Dorsolateral prefrontal cortex (tissue), 120 donors: ENCODE measurements at regions of chr11 and their contacts with region 1.

Region 1: DNA sequence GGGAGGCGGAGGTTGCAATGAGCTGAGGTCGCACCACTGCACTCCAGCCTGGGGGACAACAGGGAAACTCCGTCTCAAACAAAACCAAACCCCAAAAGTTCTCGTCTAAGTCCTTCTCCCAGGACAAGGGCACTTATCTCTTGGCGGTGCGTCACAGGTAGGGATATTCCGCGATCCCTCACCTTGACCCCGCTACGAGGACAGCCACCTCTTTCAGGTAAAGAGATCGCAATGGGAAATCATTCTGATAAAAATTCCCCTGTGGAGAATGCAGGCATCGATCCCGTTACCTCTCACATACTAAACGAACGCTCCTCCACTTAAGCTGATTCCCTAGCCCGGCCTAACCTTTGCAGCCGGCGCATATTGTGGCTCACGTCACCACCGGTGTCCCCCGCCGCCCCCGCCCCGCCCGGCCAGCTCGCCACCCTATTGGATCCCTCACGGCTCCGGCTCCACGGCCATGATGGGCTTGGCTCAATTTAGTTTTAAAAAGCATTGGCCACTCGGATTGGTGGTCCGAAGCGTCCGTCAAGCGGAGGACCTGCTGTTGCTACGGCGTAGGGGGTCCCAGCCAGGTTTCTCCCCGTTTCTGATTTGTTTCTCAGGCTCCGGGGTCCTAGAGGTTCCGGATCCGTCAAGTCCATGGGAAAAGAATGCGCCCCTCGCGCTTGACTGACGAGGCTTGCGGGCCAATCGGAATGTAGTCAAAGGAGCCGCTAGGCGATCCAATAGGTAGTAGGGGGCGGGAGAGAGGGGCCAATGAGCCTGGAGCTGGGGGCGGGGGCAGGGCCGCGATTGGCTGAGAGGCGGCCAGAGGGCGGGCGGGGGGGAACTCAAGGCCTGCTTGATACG is 439 bp upstream of the PPP6R3 start:
- DNase-seq: peak; percentile 91 to 99 (median 98)
- H3K4me3 ChIP-seq: peak overlapping the region; percentile 55 to 96 (median 86)
- H3K27ac ChIP-seq: peak overlapping the region; percentile 80 to 99 (median 95)
- H3K27me3 ChIP-seq: no peaks in the 10 kb centered on the region
- CTCF ChIP-seq: peak in 7 of 56 donors; percentile 1 to 43 (median 15)

Region 2: DNA sequence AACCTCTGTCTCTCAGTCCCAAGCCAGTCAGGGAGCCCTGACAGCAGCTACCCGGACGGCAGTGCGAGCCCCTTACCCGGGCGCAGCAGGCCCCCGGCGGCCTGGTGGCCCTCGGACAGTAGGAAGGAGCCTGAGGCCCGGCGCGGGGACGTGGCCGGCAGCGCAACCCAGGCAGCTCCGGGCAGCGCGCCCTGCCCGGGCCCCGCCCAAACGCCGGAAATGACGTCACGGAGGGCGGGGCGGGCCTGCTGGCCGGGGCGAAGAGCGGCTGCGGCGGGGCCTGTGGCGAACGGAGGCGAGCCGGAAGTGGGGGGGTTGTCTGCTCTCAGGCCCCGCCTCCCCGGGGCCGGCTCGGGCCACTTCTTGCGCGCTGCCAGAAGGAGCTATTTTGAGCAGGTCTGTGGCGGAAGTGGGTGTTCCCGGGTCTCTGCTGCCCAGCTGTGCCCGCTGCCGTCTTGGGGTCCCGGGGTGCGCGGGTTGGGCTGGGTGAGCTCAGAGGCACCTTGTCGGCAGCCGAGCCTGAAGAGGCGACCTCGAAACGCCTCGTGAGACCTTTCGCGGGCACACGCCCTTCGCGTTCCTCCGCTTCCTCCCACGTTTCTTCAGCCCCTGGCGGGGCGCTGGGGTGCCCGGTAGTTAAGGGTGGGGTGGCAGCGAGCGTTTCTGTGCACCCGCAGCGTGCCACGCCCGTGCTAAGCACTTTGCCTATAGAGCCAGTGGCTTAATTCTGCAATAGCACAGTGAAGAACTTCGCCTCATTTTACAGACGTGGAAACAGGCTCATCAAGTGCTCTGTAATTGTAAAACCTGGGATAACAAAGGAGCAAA is 188.1 kb before region 1 on chr11 and contains the start of gene C11orf24:
- intact Hi-C with region 1: loop called in 1 of 2 experiments (anchors 5 kb)
- DNase-seq: peak; percentile 88 to 98 (median 94)
- H3K4me3 ChIP-seq: peak within 1 kb of the TSS; percentile 67 to 98 (median 87)
- H3K27ac ChIP-seq: peak within 1 kb of the TSS; percentile 46 to 98 (median 93)
- H3K27me3 ChIP-seq: no peaks in the 10 kb centered on the region
- CTCF ChIP-seq: peak in 25 of 56 donors; percentile 4 to 54 (median 27)
- total RNA-seq, gene C11orf24: 12.6 to 56.0 (median 23.3) TPM

Region 3: GRCh38 chr11:68550485-68550817 is 90.3 kb after region 1 on chr11:
- intact Hi-C with region 1: loop called in 1 of 2 experiments (anchors 10 kb)
- DNase-seq: no peak
- H3K4me3 ChIP-seq: no peak overlapping the region
- H3K27ac ChIP-seq: peak overlapping the region in 9 of 59 donors; percentile 2 to 72 (median 10)
- H3K27me3 ChIP-seq: no peaks in the 10 kb centered on the region
- CTCF ChIP-seq: no peak

Region 4: GRCh38 chr11:68583041-68583446 is 122.9 kb after region 1 on chr11:
- intact Hi-C with region 1: loop called in 1 of 2 experiments (anchors 2 kb)
- DNase-seq: no peak
- H3K4me3 ChIP-seq: no peak overlapping the region
- H3K27ac ChIP-seq: no peak overlapping the region
- H3K27me3 ChIP-seq: no peaks in the 10 kb centered on the region
- CTCF ChIP-seq: no peak